Natural killer cell (primary cell): ENCODE measurements at regions of chr19 and their contacts with region 1.

Region 1: GRCh38 chr19:23758187-23759074 is at the start of gene ZNF681:
- DNase-seq: peak; percentile 79 to 92
- ATAC-seq: peak; percentile 87 to 94 (median 87)
- H3K4me3 ChIP-seq: peak within 1 kb of the TSS; percentile 76
- H3K4me3 Mint-ChIP-seq: peak within 1 kb of the TSS; percentile 93
- H3K27ac ChIP-seq: peak within 1 kb of the TSS; percentile 82
- H3K27ac Mint-ChIP-seq: peak within 1 kb of the TSS; percentile 94 to 95
- H3K4me1 ChIP-seq: peaks cover 27% of the 10 kb centered on the region
- H3K4me1 Mint-ChIP-seq: peaks cover 18 to 47% of the 10 kb centered on the region in 2 donors
- H3K27me3 ChIP-seq: no peaks in the 10 kb centered on the region
- H3K27me3 Mint-ChIP-seq: no peaks in the 10 kb centered on the region
- CTCF ChIP-seq: peak; percentile 35
- total RNA-seq, gene ZNF681: 1.2 to 2.3 (median 1.9) TPM

Region 2: DNA sequence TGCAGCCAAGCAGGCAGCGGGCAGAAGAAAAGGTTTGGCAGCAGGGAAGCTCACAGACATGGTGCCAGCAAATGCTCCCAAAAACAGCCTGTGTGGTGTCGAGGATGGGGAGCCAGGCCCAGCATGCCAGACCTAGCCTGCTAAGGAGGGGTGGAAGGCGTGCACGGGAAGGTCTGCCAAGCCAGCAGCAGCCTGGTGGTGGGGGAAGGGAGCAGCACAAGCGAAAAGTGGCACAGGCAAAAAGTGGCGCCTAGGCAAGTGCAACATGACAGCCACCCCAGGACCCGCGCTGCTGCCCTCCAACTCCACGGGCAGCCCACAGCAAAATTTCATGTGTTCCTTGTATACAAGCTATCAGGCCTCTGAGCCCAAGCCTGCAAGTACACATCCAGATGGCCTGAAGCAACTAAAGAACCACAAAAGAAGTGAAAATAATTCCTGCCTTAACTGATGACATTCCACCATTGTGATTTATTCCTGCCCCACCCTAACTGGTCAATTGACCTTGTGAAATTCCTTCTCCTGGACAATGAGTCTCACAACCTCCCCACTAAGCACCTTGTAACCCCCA is 209.2 kb before region 1 on chr19:
- intact Hi-C with region 1: no loop called
- DNase-seq: no peak
- ATAC-seq: no peak
- H3K4me3 ChIP-seq: no peak overlapping the region
- H3K4me3 Mint-ChIP-seq: no peak overlapping the region
- H3K27ac ChIP-seq: no peak overlapping the region
- H3K27ac Mint-ChIP-seq: no peak overlapping the region
- H3K4me1 ChIP-seq: no peaks in the 10 kb centered on the region
- H3K4me1 Mint-ChIP-seq: no peaks in the 10 kb centered on the region
- H3K27me3 ChIP-seq: no peaks in the 10 kb centered on the region
- H3K27me3 Mint-ChIP-seq: no peaks in the 10 kb centered on the region
- CTCF ChIP-seq: no peak

Region 3: GRCh38 chr19:23716792-23717191 is 41.6 kb before region 1 on chr19:
- intact Hi-C with region 1: no loop called
- DNase-seq: no peak
- ATAC-seq: no peak
- H3K4me3 ChIP-seq: no peak overlapping the region
- H3K4me3 Mint-ChIP-seq: no peak overlapping the region
- H3K27ac ChIP-seq: no peak overlapping the region
- H3K27ac Mint-ChIP-seq: no peak overlapping the region
- H3K4me1 ChIP-seq: no peaks in the 10 kb centered on the region
- H3K4me1 Mint-ChIP-seq: peaks cover 5 to 6% of the 10 kb centered on the region in 2 donors
- H3K27me3 ChIP-seq: no peaks in the 10 kb centered on the region
- H3K27me3 Mint-ChIP-seq: peaks cover 0 to 4% of the 10 kb centered on the region in 2 donors
- CTCF ChIP-seq: no peak

Region 4: DNA sequence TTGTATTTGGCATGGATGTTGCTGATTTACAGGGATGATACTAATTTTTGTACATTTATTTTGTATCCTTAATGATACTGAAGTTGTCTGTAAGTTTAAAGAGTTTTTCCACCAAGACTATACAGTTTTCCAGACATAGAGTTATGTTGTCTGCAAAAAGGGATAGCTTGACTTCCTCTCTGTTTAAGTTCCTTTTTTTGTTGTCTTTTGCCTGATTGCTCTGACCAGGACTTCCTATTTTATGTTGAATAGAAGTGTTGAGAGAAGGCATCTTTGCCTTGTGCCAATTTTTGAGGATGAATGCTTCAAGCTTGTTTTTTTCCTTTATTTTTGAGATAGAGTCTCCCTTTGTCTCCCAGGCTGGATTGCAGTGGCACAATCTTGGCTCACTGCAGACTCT is 37.0 kb after region 1 on chr19:
- intact Hi-C with region 1: loop called (anchors 2 kb)
- DNase-seq: no peak
- ATAC-seq: no peak
- H3K4me3 ChIP-seq: no peak overlapping the region
- H3K4me3 Mint-ChIP-seq: no peak overlapping the region
- H3K27ac ChIP-seq: no peak overlapping the region
- H3K27ac Mint-ChIP-seq: no peak overlapping the region
- H3K4me1 ChIP-seq: peaks cover 1% of the 10 kb centered on the region
- H3K4me1 Mint-ChIP-seq: peaks cover 6 to 7% of the 10 kb centered on the region in 2 donors
- H3K27me3 ChIP-seq: no peaks in the 10 kb centered on the region
- H3K27me3 Mint-ChIP-seq: no peaks in the 10 kb centered on the region
- CTCF ChIP-seq: no peak

Region 5: GRCh38 chr19:23914402-23915301 is 156.2 kb after region 1 on chr19 and contains the start of gene ZNF726:
- intact Hi-C with region 1: loop called (anchors 2 kb)
- DNase-seq: peak; percentile 83 to 93
- ATAC-seq: peak; percentile 96 to 97 (median 96)
- H3K4me3 ChIP-seq: peak within 1 kb of the TSS; percentile 57
- H3K4me3 Mint-ChIP-seq: peak within 1 kb of the TSS; percentile 95
- H3K27ac ChIP-seq: peak within 1 kb of the TSS; percentile 46
- H3K27ac Mint-ChIP-seq: peak within 1 kb of the TSS; percentile 86 to 94
- H3K4me1 ChIP-seq: peaks cover 13% of the 10 kb centered on the region
- H3K4me1 Mint-ChIP-seq: peaks cover 0 to 9% of the 10 kb centered on the region in 2 donors
- H3K27me3 ChIP-seq: no peaks in the 10 kb centered on the region
- H3K27me3 Mint-ChIP-seq: no peaks in the 10 kb centered on the region
- CTCF ChIP-seq: no peak
- total RNA-seq, gene ZNF726: 4.8 to 6.4 (median 5.8) TPM